Motor neuron (in vitro differentiated cells): ENCODE measurements at regions of chr12 and their contacts with region 1.

Region 1: DNA sequence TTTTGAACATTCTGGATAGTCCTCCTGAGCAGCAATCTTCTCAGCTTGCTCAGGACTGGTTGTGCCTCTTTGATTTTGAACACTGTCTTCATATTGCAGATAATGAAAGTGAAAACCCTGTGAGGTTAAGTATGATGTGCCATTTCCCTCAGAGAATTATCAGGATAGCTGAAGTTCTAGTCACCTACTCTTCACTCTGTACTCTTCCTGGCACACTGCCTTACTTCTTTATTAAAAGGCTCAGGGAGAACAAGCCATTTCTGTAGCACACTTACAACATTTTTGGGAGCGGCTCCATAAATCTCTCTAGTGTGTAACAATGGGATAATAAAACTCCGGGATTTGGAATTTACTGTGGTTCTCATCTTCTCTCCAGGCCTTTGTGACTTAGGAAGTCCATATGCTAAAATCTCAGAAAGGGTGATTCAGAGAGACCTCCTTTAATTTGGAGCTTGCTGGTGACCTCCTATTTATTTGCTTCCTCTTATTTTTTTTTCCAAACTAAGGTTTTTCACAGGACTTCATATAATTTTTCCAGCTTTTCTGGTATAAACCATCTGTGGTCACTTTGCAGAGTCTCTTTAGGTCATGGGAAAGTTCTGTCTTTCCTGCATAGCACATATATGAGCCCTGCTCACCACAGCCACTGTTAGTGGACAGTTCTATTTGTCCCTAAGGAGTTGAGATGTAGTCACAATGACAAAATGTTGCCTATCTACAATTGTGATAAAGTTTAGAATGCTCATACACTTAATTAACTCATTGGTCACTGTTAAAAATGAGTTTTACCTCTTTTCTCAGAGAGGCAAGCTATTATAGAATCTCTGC is 53.5 kb upstream of the LDHB start:
- ATAC-seq: peak in 1 of 8 experiments; percentile 28
- H3K4me3 ChIP-seq: no peak overlapping the region
- H3K27ac ChIP-seq: no peak overlapping the region
- H3K4me1 ChIP-seq: no peaks in the 10 kb centered on the region

Region 2: DNA sequence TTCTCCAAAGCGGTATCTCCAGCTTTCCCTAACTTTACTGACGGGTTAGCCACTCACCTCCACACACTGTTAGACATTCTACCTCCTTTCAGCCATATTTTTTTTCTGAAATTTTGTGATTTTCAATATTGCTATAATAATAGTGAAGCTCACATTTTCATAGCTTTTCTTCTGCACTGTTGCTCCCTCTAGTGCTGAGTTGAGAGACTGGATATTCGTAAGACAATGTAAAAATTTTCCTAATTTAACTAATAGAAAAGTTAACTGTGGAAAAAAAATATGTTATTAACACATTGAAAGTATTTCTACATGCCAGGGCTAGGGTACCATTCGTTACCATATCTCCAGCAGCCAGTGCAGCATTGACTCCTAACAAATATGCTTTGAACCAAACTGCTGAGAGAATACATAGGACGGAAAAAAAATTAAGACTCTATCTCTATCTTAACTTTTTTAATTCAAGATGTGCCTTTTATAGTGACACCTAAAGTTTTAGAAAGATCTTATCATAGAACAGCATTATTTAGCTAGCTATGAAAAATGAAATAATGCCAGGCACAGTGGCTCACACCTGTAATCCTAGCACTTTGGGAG is 278.8 kb after region 1 on chr12:
- in situ Hi-C with region 1: loop called in 2 of 9 experiments (anchors 25 kb)
- ATAC-seq: peak in 1 of 8 experiments; percentile 32
- H3K4me3 ChIP-seq: no peak overlapping the region
- H3K27ac ChIP-seq: no peak overlapping the region
- H3K4me1 ChIP-seq: no peaks in the 10 kb centered on the region

Region 3: GRCh38 chr12:22459838-22460490 is 748.8 kb after region 1 on chr12:
- in situ Hi-C with region 1: loop called in 1 of 9 experiments (anchors 25 kb)
- ATAC-seq: peak in 4 of 8 experiments; percentile 48 to 80 (median 68)
- H3K4me3 ChIP-seq: no peak overlapping the region
- H3K27ac ChIP-seq: no peak overlapping the region
- H3K4me1 ChIP-seq: peaks cover 6 to 15% of the 10 kb centered on the region in 2 donors